ENCODE measurements at regions of chr12 and their contacts with region 1.

Region 1: GRCh38 chr12:50111693-50112455 is at the start of gene COX14:
- DNase-seq: peak; percentile 97 to 100 (median 99)
- ATAC-seq: peak; percentile 86 to 88 (median 86)
- H3K4me3 ChIP-seq: peak within 1 kb of the TSS; percentile 81 to 98
- H3K4me3 Mint-ChIP-seq: peak within 1 kb of the TSS; percentile 92 to 97 (median 96)
- H3K27ac ChIP-seq: peak within 1 kb of the TSS; percentile 84
- H3K27ac Mint-ChIP-seq: peak within 1 kb of the TSS; percentile 92 to 96
- H3K4me1 ChIP-seq: peaks cover 2 to 51% of the 10 kb centered on the region in 2 experiments
- H3K4me1 Mint-ChIP-seq: peaks cover 32 to 48% (median 44%) of the 10 kb centered on the region in 3 donors
- H3K27me3 ChIP-seq: no peaks in the 10 kb centered on the region
- H3K27me3 Mint-ChIP-seq: no peaks in the 10 kb centered on the region
- total RNA-seq, gene COX14: 38.0 to 49.9 (median 43.9) TPM

Region 2: GRCh38 chr12:49347384-49348237 is 764.3 kb before region 1 on chr12:
- CTCF ChIA-PET with region 1: no interaction called
- POLR2A ChIA-PET with region 1: interaction called in 1 of 2 experiments, 22 read pairs
- DNase-seq: peak; percentile 44 to 85 (median 71)
- ATAC-seq: peak; percentile 80 to 86 (median 82)
- H3K4me3 ChIP-seq: peak overlapping the region; percentile 47 to 86
- H3K4me3 Mint-ChIP-seq: peak overlapping the region; percentile 73 to 80 (median 80)
- H3K27ac ChIP-seq: no peak overlapping the region
- H3K27ac Mint-ChIP-seq: peak overlapping the region in 1 of 2 donors; percentile 43
- H3K4me1 ChIP-seq: peaks cover 30 to 55% of the 10 kb centered on the region in 2 experiments
- H3K4me1 Mint-ChIP-seq: peaks cover 31 to 48% (median 42%) of the 10 kb centered on the region in 3 donors
- H3K27me3 ChIP-seq: peaks cover 23 to 91% of the 10 kb centered on the region in 2 experiments
- H3K27me3 Mint-ChIP-seq: peaks cover 40 to 75% of the 10 kb centered on the region in 2 donors

Region 3: GRCh38 chr12:49903695-49904423 is 208.0 kb before region 1 on chr12 and contains the start of gene FAIM2:
- CTCF ChIA-PET with region 1: no interaction called
- POLR2A ChIA-PET with region 1: no interaction called
- DNase-seq: peak in 31 of 35 experiments; percentile 9 to 57 (median 37)
- ATAC-seq: peak; percentile 74 to 90 (median 85)
- H3K4me3 ChIP-seq: peak within 1 kb of the TSS; percentile 25 to 39
- H3K4me3 Mint-ChIP-seq: peak within 1 kb of the TSS; percentile 59 to 77 (median 77)
- H3K27ac ChIP-seq: no peak within 1 kb of the TSS
- H3K27ac Mint-ChIP-seq: no peak within 1 kb of the TSS
- H3K4me1 ChIP-seq: peaks cover 0 to 15% of the 10 kb centered on the region in 2 experiments
- H3K4me1 Mint-ChIP-seq: peaks cover 9 to 15% (median 12%) of the 10 kb centered on the region in 3 donors
- H3K27me3 ChIP-seq: peaks cover 0 to 22% of the 10 kb centered on the region in 2 experiments
- H3K27me3 Mint-ChIP-seq: peaks cover 7 to 21% of the 10 kb centered on the region in 2 donors
- total RNA-seq, gene FAIM2: 0.25 to 0.30 TPM in 2 of 5 donors, not detected in the others

Region 4: GRCh38 chr12:50084775-50085614 is 26.9 kb before region 1 on chr12 and contains the start of gene SMARCD1:
- CTCF ChIA-PET with region 1: interaction called, 7 to 94 read pairs
- POLR2A ChIA-PET with region 1: interaction called, 5 to 11 read pairs
- DNase-seq: peak; percentile 68 to 88 (median 77)
- ATAC-seq: peak; percentile 87 to 94 (median 92)
- H3K4me3 ChIP-seq: peak within 1 kb of the TSS; percentile 80 to 83
- H3K4me3 Mint-ChIP-seq: peak within 1 kb of the TSS; percentile 87 to 93 (median 87)
- H3K27ac ChIP-seq: peak within 1 kb of the TSS; percentile 95
- H3K27ac Mint-ChIP-seq: peak within 1 kb of the TSS; percentile 93 to 98
- H3K4me1 ChIP-seq: peaks cover 10 to 17% of the 10 kb centered on the region in 2 experiments
- H3K4me1 Mint-ChIP-seq: peaks cover 39 to 44% (median 40%) of the 10 kb centered on the region in 3 donors
- H3K27me3 ChIP-seq: no peaks in the 10 kb centered on the region
- H3K27me3 Mint-ChIP-seq: no peaks in the 10 kb centered on the region
- total RNA-seq, gene SMARCD1: 71.8 to 79.8 (median 78.8) TPM

Region 5: DNA sequence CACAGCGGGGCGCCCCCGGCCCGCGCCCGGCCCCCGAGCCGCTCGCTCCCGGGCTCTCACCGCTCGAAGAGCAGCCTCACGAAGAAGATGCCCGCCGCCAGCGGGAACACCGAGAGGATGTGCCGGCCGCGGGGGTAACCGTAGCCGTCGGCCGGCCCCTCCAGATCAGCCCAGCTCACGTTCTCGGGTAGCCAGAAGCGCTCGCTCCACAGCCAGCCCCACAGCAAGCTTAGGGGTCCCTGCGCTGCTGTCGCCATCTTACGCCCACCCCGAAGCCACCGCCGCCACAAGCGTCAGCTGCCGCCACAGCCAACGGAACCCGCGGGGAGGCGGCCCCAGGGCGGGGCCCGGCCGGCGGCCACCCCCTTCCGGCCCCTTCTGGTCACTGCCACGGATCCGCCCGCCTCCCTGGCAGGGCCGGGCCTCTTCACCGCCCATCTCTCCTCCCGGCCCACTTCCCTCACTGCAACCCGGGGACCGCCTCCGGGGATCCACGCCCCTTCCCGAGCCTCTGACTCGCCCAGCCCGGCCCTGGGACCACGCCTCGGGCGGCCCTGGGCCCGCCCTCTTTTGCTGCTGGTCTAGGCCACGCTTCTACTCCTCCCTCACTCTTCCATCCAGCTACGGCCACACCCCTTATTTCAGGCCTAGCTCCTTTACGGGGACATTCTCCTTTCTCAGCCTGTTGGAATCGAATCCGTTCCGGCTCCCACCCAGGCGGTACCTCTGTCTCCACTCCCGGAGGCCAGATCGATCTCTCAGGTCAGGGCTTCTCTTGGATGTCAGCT is 55.4 kb after region 1 on chr12 and contains the start of gene CERS5:
- CTCF ChIA-PET with region 1: interaction called, 8 to 26 read pairs
- POLR2A ChIA-PET with region 1: interaction called in 1 of 2 experiments, 24 read pairs
- DNase-seq: peak; percentile 91 to 97 (median 94)
- ATAC-seq: peak; percentile 95 to 98 (median 97)
- H3K4me3 ChIP-seq: peak within 1 kb of the TSS; percentile 58 to 90
- H3K4me3 Mint-ChIP-seq: peak within 1 kb of the TSS; percentile 79 to 93 (median 92)
- H3K27ac ChIP-seq: peak within 1 kb of the TSS; percentile 68
- H3K27ac Mint-ChIP-seq: peak within 1 kb of the TSS; percentile 92
- H3K4me1 ChIP-seq: peaks cover 0 to 22% of the 10 kb centered on the region in 2 experiments
- H3K4me1 Mint-ChIP-seq: peaks cover 30 to 31% (median 31%) of the 10 kb centered on the region in 3 donors
- H3K27me3 ChIP-seq: no peaks in the 10 kb centered on the region
- H3K27me3 Mint-ChIP-seq: no peaks in the 10 kb centered on the region
- total RNA-seq, gene CERS5: 41.1 to 58.5 (median 46.2) TPM

Region 6: GRCh38 chr12:50203691-50204090 is 91.8 kb after region 1 on chr12:
- CTCF ChIA-PET with region 1: no interaction called
- POLR2A ChIA-PET with region 1: no interaction called
- DNase-seq: no peak
- ATAC-seq: no peak
- H3K4me3 ChIP-seq: no peak overlapping the region
- H3K4me3 Mint-ChIP-seq: no peak overlapping the region
- H3K27ac ChIP-seq: no peak overlapping the region
- H3K27ac Mint-ChIP-seq: no peak overlapping the region
- H3K4me1 ChIP-seq: no peaks in the 10 kb centered on the region
- H3K4me1 Mint-ChIP-seq: no peaks in the 10 kb centered on the region
- H3K27me3 ChIP-seq: no peaks in the 10 kb centered on the region
- H3K27me3 Mint-ChIP-seq: no peaks in the 10 kb centered on the region

Region 7: DNA sequence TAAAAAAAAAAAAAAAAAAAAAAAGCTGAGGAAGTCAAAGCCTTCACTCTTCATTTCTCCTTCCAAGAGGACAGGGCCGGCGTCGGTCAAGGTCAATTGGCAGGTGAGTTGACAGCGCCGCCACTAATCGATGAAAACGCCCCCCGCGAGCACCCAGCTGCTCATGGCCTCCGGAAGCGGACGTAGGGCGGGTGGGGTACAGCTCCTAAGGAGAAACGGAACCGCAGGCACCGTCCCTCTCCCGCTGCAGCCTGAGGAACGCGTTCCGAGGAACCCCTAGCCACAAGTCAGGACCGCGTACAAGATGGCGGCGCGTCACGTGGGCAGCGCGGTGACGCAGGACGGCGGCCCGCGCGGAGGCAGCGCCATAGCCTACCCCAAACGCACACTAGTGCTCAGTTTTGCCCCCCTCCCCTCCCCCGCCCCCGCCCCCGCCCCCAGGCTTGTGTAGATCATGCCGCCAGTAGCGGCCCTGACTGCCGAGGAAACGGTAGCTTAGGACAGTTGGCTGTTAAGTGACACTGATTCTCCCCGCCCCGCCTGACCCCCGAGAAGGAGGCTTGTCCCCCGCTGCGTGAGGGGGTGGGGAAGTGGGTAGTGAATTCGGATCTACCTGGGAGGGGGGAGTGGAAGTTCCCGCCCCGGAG is 651.9 kb after region 1 on chr12 and contains the start of gene ATF1:
- CTCF ChIA-PET with region 1: interaction called in 1 of 2 experiments, 4 read pairs
- POLR2A ChIA-PET with region 1: interaction called in 1 of 2 experiments, 13 read pairs
- DNase-seq: peak; percentile 79 to 95 (median 88)
- ATAC-seq: peak; percentile 83 to 84 (median 84)
- H3K4me3 ChIP-seq: peak within 1 kb of the TSS; percentile 66 to 97
- H3K4me3 Mint-ChIP-seq: peak within 1 kb of the TSS; percentile 92 to 96 (median 93)
- H3K27ac ChIP-seq: peak within 1 kb of the TSS; percentile 92
- H3K27ac Mint-ChIP-seq: peak within 1 kb of the TSS; percentile 94
- H3K4me1 ChIP-seq: peaks cover 5 to 33% of the 10 kb centered on the region in 2 experiments
- H3K4me1 Mint-ChIP-seq: peaks cover 28 to 43% (median 42%) of the 10 kb centered on the region in 3 donors
- H3K27me3 ChIP-seq: no peaks in the 10 kb centered on the region
- H3K27me3 Mint-ChIP-seq: no peaks in the 10 kb centered on the region
- total RNA-seq, gene ATF1: 33.2 to 42.8 (median 35.5) TPM

Measured in T-cell (primary cell).